ENCODE measurements at regions of chr7 and their contacts with region 1.

Region 1: DNA sequence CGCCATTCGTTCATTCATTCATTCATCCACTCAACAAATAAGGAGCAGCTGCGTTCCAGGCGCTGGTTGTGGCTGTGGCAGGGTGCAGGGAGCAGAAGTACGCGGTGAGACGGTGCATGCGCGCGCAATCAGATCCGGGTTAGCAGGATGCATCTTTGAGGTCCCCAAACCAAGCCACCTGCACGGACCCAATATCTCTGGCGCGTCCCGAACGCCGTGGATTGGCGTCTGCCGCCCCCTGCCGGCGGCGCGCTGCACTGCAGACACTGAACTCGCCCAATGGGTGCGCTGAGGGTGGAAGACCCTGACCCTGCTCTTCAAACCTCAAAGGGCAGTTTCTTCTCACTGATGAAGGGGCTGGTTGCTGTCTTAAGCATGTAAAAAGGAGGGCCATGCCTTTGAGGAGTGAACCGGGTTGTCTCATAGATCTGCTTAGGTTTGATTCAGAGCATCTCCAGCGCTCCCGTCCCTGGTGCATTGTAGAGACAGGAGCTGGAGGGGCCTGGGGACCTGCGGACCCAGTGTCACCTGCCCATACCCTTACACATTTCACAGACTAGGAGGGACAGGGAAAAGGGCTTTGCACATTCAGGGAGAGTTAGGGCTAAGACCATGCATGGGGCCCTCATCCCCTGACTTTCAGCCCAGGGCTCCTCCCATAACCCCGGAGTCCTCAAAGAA is 102.5 kb downstream of the RAMP3 start:
- DNase-seq: peak; percentile 64 to 76
- ATAC-seq: peak; percentile 76 to 89 (median 76)
- H3K4me3 ChIP-seq: no peak overlapping the region
- H3K4me3 Mint-ChIP-seq: no peak overlapping the region
- H3K27ac ChIP-seq: no peak overlapping the region
- H3K27ac Mint-ChIP-seq: no peak overlapping the region
- H3K4me1 ChIP-seq: peaks cover 6% of the 10 kb centered on the region
- H3K4me1 Mint-ChIP-seq: no peaks in the 10 kb centered on the region
- H3K27me3 ChIP-seq: peaks cover 2% of the 10 kb centered on the region
- H3K27me3 Mint-ChIP-seq: peaks cover 16 to 36% of the 10 kb centered on the region in 2 donors
- CTCF ChIP-seq: peak; percentile 99

Region 2: GRCh38 chr7:45111298-45112223 is 148.5 kb before region 1 on chr7 and contains the start of gene TBRG4:
- intact Hi-C with region 1: no loop called
- DNase-seq: peak; percentile 94 to 98
- ATAC-seq: peak; percentile 93 to 97 (median 96)
- H3K4me3 ChIP-seq: peak within 1 kb of the TSS; percentile 66
- H3K4me3 Mint-ChIP-seq: peak within 1 kb of the TSS; percentile 100
- H3K27ac ChIP-seq: peak within 1 kb of the TSS; percentile 90
- H3K27ac Mint-ChIP-seq: peak within 1 kb of the TSS; percentile 100
- H3K4me1 ChIP-seq: peaks cover 33% of the 10 kb centered on the region
- H3K4me1 Mint-ChIP-seq: peaks cover 23 to 37% of the 10 kb centered on the region in 2 donors
- H3K27me3 ChIP-seq: no peaks in the 10 kb centered on the region
- H3K27me3 Mint-ChIP-seq: peaks cover 2 to 10% of the 10 kb centered on the region in 2 donors
- CTCF ChIP-seq: no peak
- total RNA-seq, gene TBRG4: 48.6 to 56.7 (median 55.9) TPM

Region 3: DNA sequence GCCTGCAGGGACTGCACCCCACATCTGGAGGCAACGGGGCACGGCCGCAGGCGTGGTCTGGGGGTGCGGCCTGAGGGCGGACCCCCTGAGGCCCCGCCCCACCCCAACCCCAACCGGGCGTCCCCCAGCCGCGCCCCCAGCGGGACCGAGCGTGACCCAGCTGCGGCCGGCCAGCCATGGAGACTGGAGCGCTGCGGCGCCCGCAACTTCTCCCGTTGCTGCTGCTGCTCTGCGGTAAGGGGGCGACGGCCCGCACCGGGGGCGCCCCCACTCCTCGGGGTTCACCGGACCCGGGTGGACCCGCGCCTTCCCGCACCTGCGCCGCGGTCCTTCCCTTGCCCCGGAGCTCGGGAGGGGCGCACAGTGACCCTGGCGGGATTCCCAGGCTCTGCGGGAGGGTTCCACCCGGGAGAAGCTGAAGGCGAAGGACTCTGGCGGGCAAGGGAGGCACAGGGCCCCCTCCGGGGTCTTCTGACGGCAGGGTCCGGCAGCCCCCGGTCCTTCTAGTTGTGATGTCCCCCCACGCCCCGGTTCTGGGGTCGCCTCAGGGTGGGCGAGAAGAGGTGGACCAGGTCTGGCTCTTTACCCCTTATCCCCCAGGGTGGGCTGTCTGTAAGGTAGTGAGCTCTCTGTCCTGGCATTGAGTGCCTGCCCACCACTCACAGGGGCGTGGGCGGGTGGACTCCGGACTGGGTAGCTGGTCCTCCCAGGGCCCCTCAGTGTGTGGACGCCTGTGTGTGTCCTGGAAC is 102.3 kb before region 1 on chr7 and contains the start of gene RAMP3:
- intact Hi-C with region 1: loop called (anchors 1 kb)
- DNase-seq: no peak
- ATAC-seq: no peak
- H3K4me3 ChIP-seq: no peak within 1 kb of the TSS
- H3K4me3 Mint-ChIP-seq: no peak within 1 kb of the TSS
- H3K27ac ChIP-seq: no peak within 1 kb of the TSS
- H3K27ac Mint-ChIP-seq: no peak within 1 kb of the TSS
- H3K4me1 ChIP-seq: peaks cover 4% of the 10 kb centered on the region
- H3K4me1 Mint-ChIP-seq: peaks cover 0 to 20% of the 10 kb centered on the region in 2 donors
- H3K27me3 ChIP-seq: peaks cover 4% of the 10 kb centered on the region
- H3K27me3 Mint-ChIP-seq: peaks cover 16 to 28% of the 10 kb centered on the region in 2 donors
- CTCF ChIP-seq: no peak
- total RNA-seq, gene RAMP3: not detected

Region 4: DNA sequence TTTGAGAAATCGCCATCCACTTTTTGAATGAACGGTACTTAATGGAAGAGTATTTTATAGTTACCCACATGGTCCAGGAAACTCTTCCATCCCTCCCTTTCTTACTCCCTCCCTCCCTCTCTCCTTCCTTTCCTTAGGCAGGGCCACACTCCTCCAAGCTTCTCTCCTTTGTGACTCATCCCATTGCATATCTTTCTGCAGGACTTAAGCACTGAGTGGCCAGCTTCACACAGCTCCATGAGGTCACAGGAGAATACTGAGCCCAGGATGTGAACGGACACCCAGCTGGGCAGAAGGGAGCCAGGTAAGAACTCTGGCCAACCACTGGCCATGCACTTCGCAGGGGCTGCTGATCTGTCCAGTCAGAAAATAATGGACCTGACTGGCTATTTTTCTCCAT is 124.4 kb after region 1 on chr7:
- intact Hi-C with region 1: no loop called
- DNase-seq: no peak
- ATAC-seq: peak in 1 of 3 donors; percentile 17
- H3K4me3 ChIP-seq: no peak overlapping the region
- H3K4me3 Mint-ChIP-seq: no peak overlapping the region
- H3K27ac ChIP-seq: no peak overlapping the region
- H3K27ac Mint-ChIP-seq: no peak overlapping the region
- H3K4me1 ChIP-seq: no peaks in the 10 kb centered on the region
- H3K4me1 Mint-ChIP-seq: no peaks in the 10 kb centered on the region
- H3K27me3 ChIP-seq: no peaks in the 10 kb centered on the region
- H3K27me3 Mint-ChIP-seq: peaks cover 0 to 7% of the 10 kb centered on the region in 2 donors
- CTCF ChIP-seq: no peak

Measured in natural killer cell (primary cell).